Activated CD4-positive, alpha-beta T cell treated with anti-CD3 and anti-CD28 coated beads for 36 hours (primary cell): ENCODE measurements at regions of chr1 and their contacts with region 1.

Region 1: GRCh38 chr1:27111626-27112573 is 43.0 kb downstream of the SLC9A1 start:
- DNase-seq: peak; percentile 88
- ATAC-seq: peak; percentile 99
- H3K4me3 Mint-ChIP-seq: no peak overlapping the region
- H3K27ac Mint-ChIP-seq: peak overlapping the region; percentile 82
- H3K4me1 Mint-ChIP-seq: peaks cover 45% of the 10 kb centered on the region
- H3K27me3 Mint-ChIP-seq: no peaks in the 10 kb centered on the region

Region 2: DNA sequence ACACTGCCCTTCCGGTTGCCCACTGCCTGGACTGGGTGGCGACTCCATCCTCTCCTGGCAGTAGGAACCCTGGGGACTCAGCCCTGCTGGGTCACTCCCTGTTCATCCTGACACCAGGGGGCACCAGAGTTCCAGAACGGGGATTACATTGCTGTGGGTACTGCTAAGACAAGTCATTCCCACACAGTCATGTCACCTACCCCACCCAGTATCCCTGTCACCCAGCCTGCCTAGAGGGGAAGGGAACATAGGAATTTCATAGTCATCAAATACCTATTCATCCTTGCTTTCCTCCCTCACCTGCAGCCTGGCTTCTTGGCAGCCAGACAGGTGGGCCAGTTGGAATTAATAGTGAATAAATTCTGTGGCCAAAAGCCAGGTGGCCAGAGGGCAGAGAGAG is 258.7 kb before region 1 on chr1:
- CTCF ChIA-PET with region 1: no interaction called
- POLR2A ChIA-PET with region 1: no interaction called
- intact Hi-C with region 1: no loop called
- DNase-seq: peak; percentile 87
- ATAC-seq: peak; percentile 84
- H3K4me3 Mint-ChIP-seq: no peak overlapping the region
- H3K27ac Mint-ChIP-seq: no peak overlapping the region
- H3K4me1 Mint-ChIP-seq: no peaks in the 10 kb centered on the region
- H3K27me3 Mint-ChIP-seq: no peaks in the 10 kb centered on the region

Region 3: DNA sequence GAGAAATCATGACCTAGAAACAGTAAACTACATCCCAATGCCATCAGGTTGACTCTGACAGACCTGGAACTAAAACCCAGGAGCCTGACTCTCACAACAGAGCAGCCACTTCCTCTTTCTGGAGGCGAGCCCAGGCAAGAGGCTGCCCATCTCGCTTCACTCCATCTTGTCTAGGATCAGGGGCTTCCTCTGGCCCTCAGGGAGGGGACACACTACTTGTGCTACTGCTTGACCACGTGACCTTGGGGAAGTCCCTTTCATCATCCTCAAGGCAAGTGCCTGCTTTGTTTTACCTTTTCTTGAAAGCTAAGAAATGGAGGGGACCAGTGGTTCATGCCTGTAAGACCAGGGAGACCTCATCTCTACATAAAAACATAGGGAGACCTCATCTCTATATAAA is 96.6 kb before region 1 on chr1:
- CTCF ChIA-PET with region 1: no interaction called
- POLR2A ChIA-PET with region 1: no interaction called
- intact Hi-C with region 1: no loop called
- DNase-seq: no peak
- ATAC-seq: no peak
- H3K4me3 Mint-ChIP-seq: no peak overlapping the region
- H3K27ac Mint-ChIP-seq: no peak overlapping the region
- H3K4me1 Mint-ChIP-seq: peaks cover 4% of the 10 kb centered on the region
- H3K27me3 Mint-ChIP-seq: peaks cover 20% of the 10 kb centered on the region

Region 4: GRCh38 chr1:27097484-27097917 is 14.4 kb before region 1 on chr1:
- CTCF ChIA-PET with region 1: interaction called, 22 read pairs
- POLR2A ChIA-PET with region 1: no interaction called
- intact Hi-C with region 1: no loop called
- DNase-seq: peak; percentile 87
- ATAC-seq: peak; percentile 84
- H3K4me3 Mint-ChIP-seq: no peak overlapping the region
- H3K27ac Mint-ChIP-seq: no peak overlapping the region
- H3K4me1 Mint-ChIP-seq: peaks cover 9% of the 10 kb centered on the region
- H3K27me3 Mint-ChIP-seq: no peaks in the 10 kb centered on the region

Region 5: DNA sequence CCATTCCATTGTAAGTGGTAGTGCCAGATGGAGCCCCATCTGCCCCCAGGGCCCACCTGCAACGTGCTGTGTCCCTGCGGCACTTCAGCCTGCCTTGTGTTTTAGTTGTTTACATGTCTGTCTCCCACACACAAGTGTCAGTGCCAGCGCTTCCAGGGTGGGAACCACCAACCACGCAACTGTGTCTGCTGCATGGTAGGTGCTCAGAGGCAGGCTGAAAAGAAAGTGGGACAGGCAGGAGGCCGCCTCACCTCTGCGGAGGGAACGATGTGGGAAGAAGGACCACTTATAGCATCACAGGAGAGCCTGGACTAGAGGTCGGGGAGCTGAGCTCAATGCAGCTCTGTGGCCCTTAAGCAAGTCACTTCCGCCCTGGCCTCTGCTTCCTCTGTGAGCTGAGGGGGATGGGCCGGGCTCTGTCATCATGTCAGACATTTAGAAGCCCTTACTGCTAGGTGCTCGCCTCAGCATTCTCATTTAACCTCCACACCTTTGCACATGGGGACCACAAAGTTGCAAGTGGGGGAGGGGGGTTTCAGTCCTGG is 25.2 kb after region 1 on chr1:
- CTCF ChIA-PET with region 1: interaction called, 4 read pairs
- POLR2A ChIA-PET with region 1: interaction called, 5 read pairs
- intact Hi-C with region 1: loop called in 1 of 2 experiments (anchors 1 kb)
- DNase-seq: peak; percentile 94
- ATAC-seq: peak; percentile 98
- H3K4me3 Mint-ChIP-seq: peak overlapping the region; percentile 73
- H3K27ac Mint-ChIP-seq: peak overlapping the region; percentile 96
- H3K4me1 Mint-ChIP-seq: peaks cover 58% of the 10 kb centered on the region
- H3K27me3 Mint-ChIP-seq: no peaks in the 10 kb centered on the region

Region 6: DNA sequence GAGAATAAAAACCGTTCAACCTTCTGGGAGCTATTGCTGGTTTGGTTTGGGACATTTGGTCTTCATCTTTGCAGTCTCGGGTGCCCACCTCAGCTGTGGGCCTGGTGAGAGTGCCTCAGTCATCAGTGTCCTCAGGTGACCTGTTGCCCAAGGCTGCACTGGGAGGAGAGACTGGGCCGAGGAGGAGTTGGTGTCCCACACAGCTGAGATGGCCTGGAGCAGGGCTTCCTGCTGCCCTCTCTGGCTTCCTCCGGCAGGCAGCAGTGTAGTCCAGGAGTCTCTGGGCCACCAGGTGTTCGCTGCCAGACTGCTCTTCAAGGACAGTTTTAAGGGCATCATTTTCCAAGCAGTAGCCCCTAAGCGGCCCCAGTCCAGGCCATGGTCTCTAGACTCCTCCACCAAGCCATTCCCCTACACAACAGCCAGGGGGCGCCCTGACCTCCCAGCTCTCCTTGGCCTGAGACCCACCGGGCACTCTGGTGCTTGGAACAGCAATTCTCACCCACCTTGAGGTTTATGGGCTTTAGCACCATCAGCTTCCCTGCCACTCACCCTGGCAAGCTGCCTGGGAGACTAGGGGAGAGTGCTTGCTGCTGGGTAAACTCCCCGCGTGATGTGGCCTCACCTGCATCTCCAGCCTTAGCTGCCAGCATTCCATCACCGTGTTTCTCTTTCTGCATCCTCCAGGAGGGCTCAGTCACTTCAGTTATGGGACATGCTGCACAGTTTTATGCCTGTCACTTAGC is 220.8 kb after region 1 on chr1:
- CTCF ChIA-PET with region 1: no interaction called
- POLR2A ChIA-PET with region 1: no interaction called
- intact Hi-C with region 1: no loop called
- DNase-seq: peak; percentile 72
- ATAC-seq: peak; percentile 91
- H3K4me3 Mint-ChIP-seq: no peak overlapping the region
- H3K27ac Mint-ChIP-seq: no peak overlapping the region
- H3K4me1 Mint-ChIP-seq: peaks cover 27% of the 10 kb centered on the region
- H3K27me3 Mint-ChIP-seq: no peaks in the 10 kb centered on the region

Region 7: GRCh38 chr1:27363766-27364695 is 252.1 kb after region 1 on chr1:
- CTCF ChIA-PET with region 1: no interaction called
- POLR2A ChIA-PET with region 1: no interaction called
- intact Hi-C with region 1: no loop called
- DNase-seq: no peak
- ATAC-seq: no peak
- H3K4me3 Mint-ChIP-seq: no peak overlapping the region
- H3K27ac Mint-ChIP-seq: no peak overlapping the region
- H3K4me1 Mint-ChIP-seq: peaks cover 34% of the 10 kb centered on the region
- H3K27me3 Mint-ChIP-seq: no peaks in the 10 kb centered on the region